Dendritic cell treated with granulocyte-macrophage colony-stimulating factor and Interleukin-4, amounts not matched to agents 40 ng/mL and 50 ng/mL, for 4 days (primary cell): ENCODE measurements at regions of chr11 and their contacts with region 1.

Region 1: GRCh38 chr11:6377902-6378639 is 12.2 kb upstream of the SMPD1 start:
- H3K4me3 Mint-ChIP-seq: no peak overlapping the region
- H3K27ac Mint-ChIP-seq: no peak overlapping the region
- H3K4me1 Mint-ChIP-seq: peaks cover 8% of the 10 kb centered on the region
- H3K27me3 Mint-ChIP-seq: no peaks in the 10 kb centered on the region

Region 2: DNA sequence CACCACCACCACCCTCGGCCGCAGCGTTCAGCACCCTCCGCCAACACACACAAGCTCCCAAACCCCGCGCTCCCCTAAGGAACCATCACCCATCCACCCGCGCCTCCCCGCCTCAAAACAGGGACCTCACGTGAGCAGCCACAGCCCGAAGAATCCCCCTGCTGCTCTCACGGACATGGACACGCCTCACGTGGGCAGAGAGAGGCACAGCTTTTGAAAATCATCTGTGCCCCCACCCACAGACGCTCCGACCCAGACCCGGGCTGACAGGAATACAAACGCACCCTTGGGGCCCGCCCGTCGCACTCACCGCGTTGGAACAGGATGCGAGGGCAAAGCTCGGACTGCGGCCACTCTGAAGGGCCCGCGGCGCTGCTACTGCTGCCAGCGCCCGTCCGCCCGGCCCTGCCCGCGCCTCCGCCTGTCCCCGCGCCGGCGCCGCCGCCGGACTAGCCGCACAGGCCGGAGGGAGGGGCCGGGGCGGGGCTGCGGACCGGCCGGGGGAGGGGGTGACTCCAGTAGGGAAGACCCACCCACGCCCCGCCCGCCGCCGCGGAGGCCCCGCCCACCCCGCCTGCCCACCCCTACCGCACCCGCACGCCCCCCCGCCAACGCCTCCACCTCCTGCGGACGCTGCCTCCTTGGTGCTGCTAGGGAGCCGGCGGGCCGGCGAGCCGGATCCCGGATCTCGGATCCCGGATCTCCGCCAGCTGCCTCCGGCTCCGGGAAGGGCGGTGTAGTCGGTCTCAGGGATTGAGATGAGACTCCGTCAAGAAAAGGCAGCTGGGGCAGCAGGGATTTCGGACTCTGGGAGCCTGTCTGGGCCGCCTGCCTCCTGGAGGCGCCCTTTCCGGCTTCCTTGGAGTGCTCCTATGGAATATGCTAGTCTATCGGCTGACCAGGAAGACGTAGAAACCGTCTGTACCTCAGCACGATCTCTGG is 95.7 kb after region 1 on chr11 and contains the start of gene TRIM3:
- intact Hi-C with region 1: no loop called
- H3K4me3 Mint-ChIP-seq: peak within 1 kb of the TSS; percentile 92
- H3K27ac Mint-ChIP-seq: peak within 1 kb of the TSS; percentile 94
- H3K4me1 Mint-ChIP-seq: peaks cover 40% of the 10 kb centered on the region
- H3K27me3 Mint-ChIP-seq: no peaks in the 10 kb centered on the region

Region 3: GRCh38 chr11:6505577-6506240 is 127.6 kb after region 1 on chr11:
- intact Hi-C with region 1: loop called (anchors 1 kb)
- H3K4me3 Mint-ChIP-seq: no peak overlapping the region
- H3K27ac Mint-ChIP-seq: no peak overlapping the region
- H3K4me1 Mint-ChIP-seq: no peaks in the 10 kb centered on the region
- H3K27me3 Mint-ChIP-seq: no peaks in the 10 kb centered on the region

Region 4: GRCh38 chr11:6531267-6531752 is 153.2 kb after region 1 on chr11:
- intact Hi-C with region 1: no loop called
- H3K4me3 Mint-ChIP-seq: no peak overlapping the region
- H3K27ac Mint-ChIP-seq: no peak overlapping the region
- H3K4me1 Mint-ChIP-seq: no peaks in the 10 kb centered on the region
- H3K27me3 Mint-ChIP-seq: no peaks in the 10 kb centered on the region